MCF 10A (cell line): ENCODE measurements at regions of chr6 and their contacts with region 1.

Region 1: GRCh38 chr6:110179401-110180227 is at the start of gene WASF1:
- DNase-seq: peak; percentile 99
- H3K4me3 Mint-ChIP-seq: no peak within 1 kb of the TSS
- H3K27ac Mint-ChIP-seq: peak within 1 kb of the TSS; percentile 40
- H3K4me1 Mint-ChIP-seq: peaks cover 16% of the 10 kb centered on the region
- H3K27me3 Mint-ChIP-seq: no peaks in the 10 kb centered on the region
- CTCF ChIP-seq: no peak
- total RNA-seq, gene WASF1: 50.5 and 55.7 TPM in 2 replicates

Region 2: GRCh38 chr6:109705258-109705657 is 474.4 kb before region 1 on chr6:
- CTCF ChIA-PET with region 1: interaction called, 3 read pairs
- POLR2A ChIA-PET with region 1: no interaction called
- intact Hi-C with region 1: loop called (anchors 2 kb)
- DNase-seq: peak; percentile 88
- H3K4me3 Mint-ChIP-seq: no peak overlapping the region
- H3K27ac Mint-ChIP-seq: no peak overlapping the region
- H3K4me1 Mint-ChIP-seq: peaks cover 5% of the 10 kb centered on the region
- H3K27me3 Mint-ChIP-seq: no peaks in the 10 kb centered on the region
- CTCF ChIP-seq: peak; percentile 95

Region 3: GRCh38 chr6:110098511-110099116 is 81.0 kb before region 1 on chr6:
- CTCF ChIA-PET with region 1: interaction called, 10 read pairs
- POLR2A ChIA-PET with region 1: interaction called, 143 read pairs
- intact Hi-C with region 1: loop called (anchors 5 kb)
- DNase-seq: peak; percentile 92
- H3K4me3 Mint-ChIP-seq: peak overlapping the region; percentile 47
- H3K27ac Mint-ChIP-seq: peak overlapping the region; percentile 85
- H3K4me1 Mint-ChIP-seq: peaks cover 47% of the 10 kb centered on the region
- H3K27me3 Mint-ChIP-seq: no peaks in the 10 kb centered on the region
- CTCF ChIP-seq: no peak

Region 4: GRCh38 chr6:110158479-110158878 is 21.1 kb before region 1 on chr6:
- CTCF ChIA-PET with region 1: no interaction called
- POLR2A ChIA-PET with region 1: interaction called, 15 read pairs
- intact Hi-C with region 1: no loop called
- DNase-seq: no peak
- H3K4me3 Mint-ChIP-seq: no peak overlapping the region
- H3K27ac Mint-ChIP-seq: no peak overlapping the region
- H3K4me1 Mint-ChIP-seq: no peaks in the 10 kb centered on the region
- H3K27me3 Mint-ChIP-seq: no peaks in the 10 kb centered on the region
- CTCF ChIP-seq: no peak

Region 5: GRCh38 chr6:110207652-110208051 is 28.0 kb after region 1 on chr6:
- CTCF ChIA-PET with region 1: interaction called, 3 read pairs
- POLR2A ChIA-PET with region 1: interaction called, 10 read pairs
- intact Hi-C with region 1: no loop called
- DNase-seq: no peak
- H3K4me3 Mint-ChIP-seq: no peak overlapping the region
- H3K27ac Mint-ChIP-seq: no peak overlapping the region
- H3K4me1 Mint-ChIP-seq: no peaks in the 10 kb centered on the region
- H3K27me3 Mint-ChIP-seq: no peaks in the 10 kb centered on the region
- CTCF ChIP-seq: no peak

Region 6: GRCh38 chr6:110971468-110971867 is 791.9 kb after region 1 on chr6:
- CTCF ChIA-PET with region 1: no interaction called
- POLR2A ChIA-PET with region 1: no interaction called
- intact Hi-C with region 1: no loop called
- DNase-seq: no peak
- H3K4me3 Mint-ChIP-seq: no peak overlapping the region
- H3K27ac Mint-ChIP-seq: no peak overlapping the region
- H3K4me1 Mint-ChIP-seq: peaks cover 7% of the 10 kb centered on the region
- H3K27me3 Mint-ChIP-seq: no peaks in the 10 kb centered on the region
- CTCF ChIP-seq: no peak